Heart right ventricle (tissue), 16 donors: ENCODE measurements at regions of chr1 and their contacts with region 1.

Region 1: GRCh38 chr1:61808968-61809367 is 66.7 kb downstream of the PATJ start:
- DNase-seq: no peak
- ATAC-seq: no peak
- H3K4me3 ChIP-seq: no peak overlapping the region
- H3K27ac ChIP-seq: no peak overlapping the region
- H3K4me1 ChIP-seq: no peaks in the 10 kb centered on the region
- H3K27me3 ChIP-seq: no peaks in the 10 kb centered on the region
- CTCF ChIP-seq: no peak

Region 2: DNA sequence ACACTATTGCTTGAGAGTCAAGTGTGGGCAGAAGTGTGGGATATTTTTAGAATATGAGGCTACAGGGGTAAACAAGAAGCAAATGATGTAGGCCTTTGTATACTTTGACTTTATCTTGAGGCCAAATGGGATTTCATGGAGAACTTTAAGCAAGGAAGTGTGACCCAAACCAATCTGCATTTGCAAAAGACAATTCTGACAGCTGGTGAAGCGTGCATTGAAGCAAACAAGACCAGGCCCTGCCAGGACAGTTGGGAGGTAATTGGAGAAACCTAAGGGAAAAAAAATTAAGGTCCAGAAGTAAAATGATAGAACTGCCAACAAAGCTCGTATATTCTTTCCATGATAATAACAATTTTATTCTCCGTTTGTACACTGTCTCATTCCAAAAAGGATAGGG is 252.3 kb before region 1 on chr1:
- intact Hi-C with region 1: loop called in 1 of 10 experiments (anchors 5 kb)
- DNase-seq: no peak
- ATAC-seq: peak in 1 of 8 donors; percentile 42
- H3K4me3 ChIP-seq: no peak overlapping the region
- H3K27ac ChIP-seq: peak overlapping the region in 1 of 10 donors; percentile 26
- H3K4me1 ChIP-seq: no peaks in the 10 kb centered on the region
- H3K27me3 ChIP-seq: no peaks in the 10 kb centered on the region
- CTCF ChIP-seq: no peak

Region 3: DNA sequence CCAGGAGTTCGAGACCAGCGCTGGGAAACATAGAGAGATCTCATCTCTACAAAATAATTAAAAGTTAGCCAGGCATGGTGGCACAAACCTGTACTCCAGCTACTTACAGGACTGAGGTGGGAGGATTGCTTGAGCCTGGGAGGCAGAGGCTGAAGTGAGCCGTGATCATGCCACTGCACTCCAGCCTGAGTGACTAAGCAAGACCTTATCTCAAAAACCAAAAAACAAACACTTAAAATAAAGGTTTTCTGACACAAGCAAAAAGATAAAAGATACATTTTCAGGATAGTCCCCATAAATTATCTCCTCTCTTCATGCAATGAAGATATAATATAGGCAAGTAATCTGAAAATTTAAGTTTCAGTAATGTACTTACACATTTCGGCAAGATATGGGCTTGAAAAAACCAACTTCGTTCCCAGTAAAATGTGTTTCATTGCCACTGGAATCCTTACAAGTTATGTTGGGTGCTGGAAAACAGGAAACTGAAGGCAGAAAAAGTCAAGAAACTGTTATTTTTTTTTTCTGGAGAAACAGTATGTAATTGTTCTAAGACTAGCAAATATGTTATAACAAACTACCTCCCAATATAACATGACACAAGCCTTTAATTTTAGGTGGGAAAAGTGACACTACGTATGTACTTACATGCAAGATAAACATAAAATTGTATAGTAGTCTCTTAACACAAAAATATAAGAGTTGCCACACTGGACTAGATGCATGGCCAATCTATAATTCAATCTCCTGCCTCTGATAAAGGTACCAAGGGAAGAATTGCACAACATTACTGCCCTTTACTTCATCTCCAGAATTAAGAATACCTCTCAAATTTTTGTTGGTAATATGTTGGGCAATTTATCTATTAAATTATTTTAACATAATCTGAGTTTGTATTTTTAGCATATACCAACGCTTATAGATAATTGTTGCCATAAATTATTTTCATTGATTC is 99.7 kb before region 1 on chr1:
- intact Hi-C with region 1: loop called in 1 of 10 experiments (anchors 10 kb)
- DNase-seq: no peak
- ATAC-seq: no peak
- H3K4me3 ChIP-seq: no peak overlapping the region
- H3K27ac ChIP-seq: no peak overlapping the region
- H3K4me1 ChIP-seq: peaks cover 0 to 8% (median 0%) of the 10 kb centered on the region in 9 donors
- H3K27me3 ChIP-seq: no peaks in the 10 kb centered on the region
- CTCF ChIP-seq: no peak